ENCODE measurements at regions of chr2 and their contacts with region 1.

Region 1: DNA sequence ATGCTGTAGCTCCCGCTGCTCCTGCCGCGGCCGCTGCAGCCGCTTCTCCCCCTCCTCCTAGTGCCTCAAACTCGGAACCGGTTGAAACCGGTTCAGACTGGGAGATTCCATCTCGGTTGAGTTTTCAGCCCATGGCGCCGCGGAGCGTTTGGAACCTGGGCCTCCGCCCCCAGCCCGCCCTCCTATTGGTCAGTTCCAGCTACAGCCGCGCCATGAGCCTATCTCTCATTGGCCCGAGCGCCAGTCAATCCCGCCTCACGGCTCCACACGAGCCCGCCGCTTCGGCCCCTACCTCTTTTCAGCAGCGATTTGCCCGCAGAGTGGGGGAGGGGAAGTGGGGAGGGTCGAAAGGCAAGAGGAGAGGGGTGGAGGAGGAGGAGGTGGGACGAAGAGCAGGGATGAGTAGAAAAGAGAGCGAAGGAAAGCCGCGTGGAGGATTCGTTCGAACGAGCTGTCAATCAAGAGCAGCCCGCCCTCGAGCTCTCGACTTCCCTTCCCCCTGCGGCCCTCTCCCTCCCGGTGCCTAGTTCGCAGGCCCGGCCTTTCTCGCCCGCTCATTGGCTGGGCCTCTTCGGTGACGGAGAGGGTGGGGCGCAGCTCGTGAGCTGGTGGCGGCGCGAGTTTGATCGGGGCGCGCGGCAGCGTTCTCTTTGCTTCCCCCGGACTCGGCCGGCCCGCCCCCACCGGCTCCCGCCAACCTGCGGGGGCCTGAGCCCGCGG is at the start of gene XPO1:
- DNase-seq: peak; percentile 98 to 99
- ATAC-seq: peak; percentile 77 to 92 (median 83)
- H3K4me3 ChIP-seq: peak within 1 kb of the TSS; percentile 80
- H3K4me3 Mint-ChIP-seq: peak within 1 kb of the TSS; percentile 100
- H3K27ac ChIP-seq: peak within 1 kb of the TSS; percentile 98
- H3K27ac Mint-ChIP-seq: peak within 1 kb of the TSS; percentile 90 to 99
- H3K4me1 ChIP-seq: peaks cover 10% of the 10 kb centered on the region
- H3K4me1 Mint-ChIP-seq: peaks cover 39 to 45% of the 10 kb centered on the region in 2 donors
- H3K27me3 ChIP-seq: no peaks in the 10 kb centered on the region
- H3K27me3 Mint-ChIP-seq: no peaks in the 10 kb centered on the region
- CTCF ChIP-seq: no peak
- total RNA-seq, gene XPO1: 120 to 157 (median 137) TPM

Region 2: GRCh38 chr2:60899230-60899891 is 639.0 kb before region 1 on chr2:
- intact Hi-C with region 1: no loop called
- DNase-seq: peak in 1 of 2 donors; percentile 37
- ATAC-seq: peak in 2 of 3 donors; percentile 21 to 54
- H3K4me3 ChIP-seq: no peak overlapping the region
- H3K4me3 Mint-ChIP-seq: peak overlapping the region; percentile 45
- H3K27ac ChIP-seq: no peak overlapping the region
- H3K27ac Mint-ChIP-seq: peak overlapping the region; percentile 4 to 36
- H3K4me1 ChIP-seq: peaks cover 4% of the 10 kb centered on the region
- H3K4me1 Mint-ChIP-seq: peaks cover 21 to 33% of the 10 kb centered on the region in 2 donors
- H3K27me3 ChIP-seq: no peaks in the 10 kb centered on the region
- H3K27me3 Mint-ChIP-seq: no peaks in the 10 kb centered on the region
- CTCF ChIP-seq: no peak

Region 3: DNA sequence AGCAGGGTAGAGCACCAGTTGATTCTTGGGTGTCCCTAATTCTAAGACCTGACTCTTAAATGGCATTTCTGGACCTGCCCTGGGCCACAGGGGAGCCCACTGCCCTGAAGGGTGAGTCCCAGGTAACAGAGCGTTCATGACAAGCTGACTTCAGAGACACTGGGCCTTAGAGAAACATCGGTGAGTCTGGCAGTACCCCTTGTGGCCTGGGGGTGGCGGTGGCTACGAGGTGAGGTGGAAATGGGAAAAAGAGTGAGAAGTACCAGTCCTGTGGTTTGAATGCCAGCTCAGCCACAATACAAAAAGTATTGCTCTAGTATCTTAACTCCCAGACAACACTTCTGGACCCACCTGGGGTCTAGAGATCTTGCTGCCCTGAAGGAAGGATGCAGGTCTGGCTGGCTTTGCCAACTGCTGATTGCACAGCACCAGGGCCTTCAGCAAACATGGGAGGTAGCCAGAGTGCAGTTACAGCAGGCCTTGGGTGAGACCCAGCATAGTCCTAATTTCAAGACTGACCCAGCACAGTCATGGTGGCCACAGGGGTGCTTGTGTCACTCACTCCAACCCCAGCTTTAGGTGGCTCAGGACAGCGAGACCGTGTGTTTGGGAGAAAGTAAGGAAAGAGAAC is 112.0 kb before region 1 on chr2:
- intact Hi-C with region 1: loop called (anchors 1 kb)
- DNase-seq: peak; percentile 71 to 87
- ATAC-seq: peak; percentile 90 to 95 (median 94)
- H3K4me3 ChIP-seq: no peak overlapping the region
- H3K4me3 Mint-ChIP-seq: no peak overlapping the region
- H3K27ac ChIP-seq: peak overlapping the region; percentile 76
- H3K27ac Mint-ChIP-seq: peak overlapping the region; percentile 74 to 88
- H3K4me1 ChIP-seq: peaks cover 32% of the 10 kb centered on the region
- H3K4me1 Mint-ChIP-seq: peaks cover 59 to 61% of the 10 kb centered on the region in 2 donors
- H3K27me3 ChIP-seq: no peaks in the 10 kb centered on the region
- H3K27me3 Mint-ChIP-seq: no peaks in the 10 kb centered on the region
- CTCF ChIP-seq: peak; percentile 74

Region 4: DNA sequence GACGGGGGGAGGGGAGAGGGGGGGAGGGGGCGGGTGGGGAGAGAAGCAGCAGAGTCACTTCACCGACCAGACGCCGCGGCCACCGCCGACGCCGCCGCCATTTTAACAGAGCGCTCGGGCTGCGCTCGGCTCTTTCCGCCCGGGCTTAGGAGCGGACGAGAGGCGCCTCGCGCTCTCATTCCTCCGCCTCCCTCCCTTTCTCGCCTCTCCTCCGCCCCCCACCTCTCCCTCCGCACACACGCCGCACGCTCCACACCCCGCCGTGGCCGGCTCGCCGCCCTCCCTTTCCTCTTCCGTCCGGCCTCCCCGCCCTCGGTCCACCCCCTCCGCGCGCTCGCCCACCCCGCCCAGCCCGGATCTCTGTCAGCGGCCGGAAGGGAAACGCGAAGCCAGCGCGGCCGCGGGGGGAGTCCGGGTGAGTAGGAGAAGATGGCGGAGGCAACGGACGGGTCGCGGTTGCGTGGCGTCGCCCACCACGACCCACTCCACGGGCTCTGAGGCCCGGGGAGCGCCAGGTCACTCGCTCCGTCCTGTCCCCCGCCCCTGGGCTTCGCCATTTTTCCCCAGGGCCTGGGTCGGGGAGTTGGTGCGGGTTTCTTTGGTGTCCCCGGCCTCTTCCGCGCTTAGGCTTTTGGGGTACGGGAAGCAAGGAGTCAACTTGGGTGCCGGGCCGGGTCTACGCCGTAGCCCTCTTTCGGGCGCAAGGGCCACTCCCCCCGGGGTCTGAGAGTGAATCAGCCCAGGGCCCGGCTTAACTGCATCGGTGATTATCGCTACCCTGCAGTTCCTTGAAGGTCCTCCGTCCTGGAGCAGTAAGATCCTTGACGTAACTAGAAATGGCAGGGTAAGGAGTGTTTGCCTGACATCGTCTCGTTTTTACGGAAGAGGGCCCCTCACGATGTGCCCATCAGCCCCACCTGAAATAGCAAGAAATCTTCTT is 67.1 kb before region 1 on chr2 and contains the start of gene USP34:
- intact Hi-C with region 1: loop called (anchors 1 kb)
- DNase-seq: peak; percentile 85 to 97
- ATAC-seq: peak; percentile 85 to 97 (median 89)
- H3K4me3 ChIP-seq: peak within 1 kb of the TSS; percentile 98
- H3K4me3 Mint-ChIP-seq: peak within 1 kb of the TSS; percentile 96
- H3K27ac ChIP-seq: peak within 1 kb of the TSS; percentile 99
- H3K27ac Mint-ChIP-seq: peak within 1 kb of the TSS; percentile 91 to 95
- H3K4me1 ChIP-seq: peaks cover 27% of the 10 kb centered on the region
- H3K4me1 Mint-ChIP-seq: peaks cover 29 to 31% of the 10 kb centered on the region in 2 donors
- H3K27me3 ChIP-seq: no peaks in the 10 kb centered on the region
- H3K27me3 Mint-ChIP-seq: no peaks in the 10 kb centered on the region
- CTCF ChIP-seq: no peak
- total RNA-seq, gene USP34: 184 to 204 (median 199) TPM

Region 5: GRCh38 chr2:61694312-61695274 is 156.2 kb after region 1 on chr2:
- intact Hi-C with region 1: loop called (anchors 10 kb)
- DNase-seq: peak; percentile 83 to 90
- ATAC-seq: peak; percentile 97 to 100 (median 97)
- H3K4me3 ChIP-seq: peak overlapping the region; percentile 88
- H3K4me3 Mint-ChIP-seq: peak overlapping the region; percentile 89
- H3K27ac ChIP-seq: peak overlapping the region; percentile 84
- H3K27ac Mint-ChIP-seq: peak overlapping the region; percentile 89 to 93
- H3K4me1 ChIP-seq: peaks cover 17% of the 10 kb centered on the region
- H3K4me1 Mint-ChIP-seq: peaks cover 10 to 19% of the 10 kb centered on the region in 2 donors
- H3K27me3 ChIP-seq: no peaks in the 10 kb centered on the region
- H3K27me3 Mint-ChIP-seq: no peaks in the 10 kb centered on the region
- CTCF ChIP-seq: peak; percentile 45

Region 6: DNA sequence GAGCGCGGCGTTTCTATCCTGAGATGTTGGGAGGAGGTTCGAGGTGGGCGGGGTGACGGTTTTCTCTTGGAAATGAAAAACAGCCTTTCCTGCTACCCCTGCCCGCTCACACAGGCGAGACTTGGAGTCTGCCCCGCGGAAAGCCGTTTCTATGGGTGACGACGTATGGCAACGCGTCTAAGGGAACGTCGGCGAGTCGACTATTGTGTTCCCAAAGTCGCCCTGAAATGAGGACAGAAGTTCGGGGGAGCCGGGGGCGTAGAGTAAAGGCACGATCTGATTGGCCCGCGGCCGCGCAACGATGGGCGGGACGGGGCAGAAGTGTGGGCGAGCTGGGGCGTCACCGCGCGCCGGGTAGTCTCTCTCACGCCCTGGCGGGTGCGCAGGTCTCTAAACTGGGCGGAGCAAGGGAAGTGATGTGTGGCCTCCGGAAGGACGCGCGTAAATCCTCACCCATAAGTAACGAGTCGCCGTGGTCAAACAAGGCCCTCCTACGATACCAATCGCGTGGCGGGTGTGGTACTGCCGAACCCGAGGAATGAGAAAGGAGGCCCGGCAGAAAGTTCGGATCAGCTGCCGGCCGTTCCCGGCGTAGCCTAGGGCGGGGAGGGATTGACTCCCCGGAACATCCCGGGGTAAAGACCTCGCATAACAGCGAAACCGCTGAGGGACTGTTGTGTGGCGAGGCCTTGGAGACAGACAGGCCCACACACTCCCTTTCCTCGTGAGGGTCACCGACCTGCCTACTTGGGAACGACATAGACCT is 225.9 kb after region 1 on chr2:
- intact Hi-C with region 1: loop called (anchors 2 kb)
- DNase-seq: peak; percentile 94 to 98
- ATAC-seq: peak; percentile 96 to 100 (median 96)
- H3K4me3 ChIP-seq: peak overlapping the region; percentile 95
- H3K4me3 Mint-ChIP-seq: peak overlapping the region; percentile 92
- H3K27ac ChIP-seq: peak overlapping the region; percentile 100
- H3K27ac Mint-ChIP-seq: peak overlapping the region; percentile 89 to 96
- H3K4me1 ChIP-seq: peaks cover 11% of the 10 kb centered on the region
- H3K4me1 Mint-ChIP-seq: peaks cover 12 to 13% of the 10 kb centered on the region in 2 donors
- H3K27me3 ChIP-seq: no peaks in the 10 kb centered on the region
- H3K27me3 Mint-ChIP-seq: peaks cover 3 to 4% of the 10 kb centered on the region in 2 donors
- CTCF ChIP-seq: no peak

Region 7: GRCh38 chr2:61854474-61855182 is 316.3 kb after region 1 on chr2:
- intact Hi-C with region 1: loop called (anchors 10 kb)
- DNase-seq: peak; percentile 71 to 97
- ATAC-seq: peak; percentile 87 to 94 (median 89)
- H3K4me3 ChIP-seq: peak overlapping the region; percentile 80
- H3K4me3 Mint-ChIP-seq: peak overlapping the region; percentile 99
- H3K27ac ChIP-seq: peak overlapping the region; percentile 64
- H3K27ac Mint-ChIP-seq: peak overlapping the region; percentile 88 to 89
- H3K4me1 ChIP-seq: peaks cover 17% of the 10 kb centered on the region
- H3K4me1 Mint-ChIP-seq: peaks cover 18 to 25% of the 10 kb centered on the region in 2 donors
- H3K27me3 ChIP-seq: no peaks in the 10 kb centered on the region
- H3K27me3 Mint-ChIP-seq: no peaks in the 10 kb centered on the region
- CTCF ChIP-seq: no peak

Region 8: DNA sequence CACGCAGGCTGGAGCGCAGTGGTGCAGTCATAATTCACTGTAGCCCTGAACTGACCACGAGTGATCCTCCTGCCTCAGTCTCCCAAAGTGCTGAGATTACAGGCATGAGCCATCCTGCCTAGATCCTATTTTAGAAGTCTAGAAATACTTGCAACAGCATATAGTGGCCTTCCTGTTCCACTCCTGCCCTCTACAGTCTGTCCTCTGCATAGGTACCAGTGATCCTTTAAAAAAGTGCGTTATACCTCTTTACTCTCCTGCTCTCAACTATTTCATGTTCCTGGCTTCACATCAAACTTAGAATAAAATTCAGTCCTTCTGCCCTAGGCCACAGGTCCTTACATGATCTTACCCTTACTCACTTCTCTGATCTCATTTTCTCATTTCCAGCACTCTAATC is 373.1 kb after region 1 on chr2:
- intact Hi-C with region 1: no loop called
- DNase-seq: no peak
- ATAC-seq: no peak
- H3K4me3 ChIP-seq: no peak overlapping the region
- H3K4me3 Mint-ChIP-seq: no peak overlapping the region
- H3K27ac ChIP-seq: no peak overlapping the region
- H3K27ac Mint-ChIP-seq: no peak overlapping the region
- H3K4me1 ChIP-seq: peaks cover 3% of the 10 kb centered on the region
- H3K4me1 Mint-ChIP-seq: peaks cover 9 to 16% of the 10 kb centered on the region in 2 donors
- H3K27me3 ChIP-seq: no peaks in the 10 kb centered on the region
- H3K27me3 Mint-ChIP-seq: no peaks in the 10 kb centered on the region
- CTCF ChIP-seq: no peak